CD4-positive, alpha-beta T cell (primary cell): ENCODE measurements at regions of chr9 and their contacts with region 1.

Region 1: GRCh38 chr9:30382271-30382670 is 2002.2 kb upstream of the ACO1 start:
- DNase-seq: no peak
- ATAC-seq: no peak
- H3K4me3 ChIP-seq: no peak overlapping the region
- H3K4me3 Mint-ChIP-seq: no peak overlapping the region
- H3K27ac ChIP-seq: no peak overlapping the region
- H3K27ac Mint-ChIP-seq: no peak overlapping the region
- H3K4me1 ChIP-seq: no peaks in the 10 kb centered on the region
- H3K4me1 Mint-ChIP-seq: no peaks in the 10 kb centered on the region
- H3K27me3 ChIP-seq: no peaks in the 10 kb centered on the region
- H3K27me3 Mint-ChIP-seq: no peaks in the 10 kb centered on the region
- CTCF ChIP-seq: no peak

Region 2: DNA sequence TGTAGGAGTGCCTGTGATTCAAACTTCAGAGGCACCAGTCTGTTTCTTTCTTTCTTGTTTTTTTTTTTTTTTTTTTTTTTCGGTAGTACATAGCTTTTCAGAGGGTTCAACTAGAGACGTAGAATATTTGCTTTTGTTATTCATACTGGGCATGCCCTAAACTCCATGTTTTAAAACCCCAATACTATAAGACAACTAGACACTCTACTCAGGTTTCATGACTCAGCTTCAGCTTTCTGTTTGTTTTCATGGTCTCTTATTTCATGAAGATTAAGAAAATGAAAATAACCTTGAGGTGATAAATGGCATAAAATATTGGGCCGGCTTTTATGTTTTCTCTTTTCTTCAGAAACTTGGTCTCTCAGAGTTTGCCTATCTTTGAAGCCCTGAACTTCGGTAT is 124.2 kb before region 1 on chr9:
- CTCF ChIA-PET with region 1: no interaction called
- POLR2A ChIA-PET with region 1: no interaction called
- intact Hi-C with region 1: loop called in 1 of 2 experiments (anchors 10 kb)
- DNase-seq: no peak
- ATAC-seq: no peak
- H3K4me3 ChIP-seq: no peak overlapping the region
- H3K4me3 Mint-ChIP-seq: no peak overlapping the region
- H3K27ac ChIP-seq: no peak overlapping the region
- H3K27ac Mint-ChIP-seq: no peak overlapping the region
- H3K4me1 ChIP-seq: no peaks in the 10 kb centered on the region
- H3K4me1 Mint-ChIP-seq: no peaks in the 10 kb centered on the region
- H3K27me3 ChIP-seq: no peaks in the 10 kb centered on the region
- H3K27me3 Mint-ChIP-seq: no peaks in the 10 kb centered on the region
- CTCF ChIP-seq: no peak

Region 3: DNA sequence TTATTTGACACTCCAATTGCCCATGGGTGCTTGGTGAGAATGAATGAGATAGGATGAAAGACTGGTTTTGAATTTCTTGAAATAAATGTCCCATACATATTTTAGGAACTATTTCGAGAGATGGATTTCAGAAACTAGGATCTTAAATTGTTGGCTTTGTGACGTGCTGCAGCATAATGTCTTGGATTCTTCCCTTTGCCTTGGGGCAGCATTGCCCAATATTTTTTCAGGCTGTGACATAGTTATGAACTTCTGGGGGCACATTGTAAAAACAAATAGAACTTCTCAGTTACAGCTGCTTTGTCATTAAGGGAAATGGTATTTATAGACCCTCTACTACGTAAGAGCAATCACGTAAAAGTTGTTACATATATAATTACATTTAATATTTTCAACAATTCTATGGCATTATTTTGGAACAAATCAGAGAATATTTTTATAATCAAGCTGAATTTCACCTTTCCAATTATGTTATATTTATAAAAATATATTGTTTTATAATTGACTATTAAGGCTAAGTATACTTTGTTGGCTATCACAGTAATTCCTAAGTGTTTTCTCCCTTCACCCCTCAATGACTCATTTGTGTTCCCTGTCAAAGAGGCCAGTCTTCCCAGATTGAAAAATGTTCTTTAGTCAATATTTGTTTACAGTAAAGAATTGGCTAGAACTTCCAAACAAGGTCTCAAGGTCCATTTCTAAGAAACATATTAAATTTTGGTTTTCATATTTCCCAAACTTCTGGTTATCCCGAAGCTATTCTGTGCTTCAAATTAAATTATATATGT is 613.9 kb after region 1 on chr9:
- CTCF ChIA-PET with region 1: no interaction called
- POLR2A ChIA-PET with region 1: no interaction called
- intact Hi-C with region 1: no loop called
- DNase-seq: no peak
- ATAC-seq: no peak
- H3K4me3 ChIP-seq: no peak overlapping the region
- H3K4me3 Mint-ChIP-seq: no peak overlapping the region
- H3K27ac ChIP-seq: no peak overlapping the region
- H3K27ac Mint-ChIP-seq: no peak overlapping the region
- H3K4me1 ChIP-seq: no peaks in the 10 kb centered on the region
- H3K4me1 Mint-ChIP-seq: no peaks in the 10 kb centered on the region
- H3K27me3 ChIP-seq: no peaks in the 10 kb centered on the region
- H3K27me3 Mint-ChIP-seq: no peaks in the 10 kb centered on the region
- CTCF ChIP-seq: no peak